HepG2 (cell line): ENCODE measurements at regions of chr3 and their contacts with region 1.

Region 1: DNA sequence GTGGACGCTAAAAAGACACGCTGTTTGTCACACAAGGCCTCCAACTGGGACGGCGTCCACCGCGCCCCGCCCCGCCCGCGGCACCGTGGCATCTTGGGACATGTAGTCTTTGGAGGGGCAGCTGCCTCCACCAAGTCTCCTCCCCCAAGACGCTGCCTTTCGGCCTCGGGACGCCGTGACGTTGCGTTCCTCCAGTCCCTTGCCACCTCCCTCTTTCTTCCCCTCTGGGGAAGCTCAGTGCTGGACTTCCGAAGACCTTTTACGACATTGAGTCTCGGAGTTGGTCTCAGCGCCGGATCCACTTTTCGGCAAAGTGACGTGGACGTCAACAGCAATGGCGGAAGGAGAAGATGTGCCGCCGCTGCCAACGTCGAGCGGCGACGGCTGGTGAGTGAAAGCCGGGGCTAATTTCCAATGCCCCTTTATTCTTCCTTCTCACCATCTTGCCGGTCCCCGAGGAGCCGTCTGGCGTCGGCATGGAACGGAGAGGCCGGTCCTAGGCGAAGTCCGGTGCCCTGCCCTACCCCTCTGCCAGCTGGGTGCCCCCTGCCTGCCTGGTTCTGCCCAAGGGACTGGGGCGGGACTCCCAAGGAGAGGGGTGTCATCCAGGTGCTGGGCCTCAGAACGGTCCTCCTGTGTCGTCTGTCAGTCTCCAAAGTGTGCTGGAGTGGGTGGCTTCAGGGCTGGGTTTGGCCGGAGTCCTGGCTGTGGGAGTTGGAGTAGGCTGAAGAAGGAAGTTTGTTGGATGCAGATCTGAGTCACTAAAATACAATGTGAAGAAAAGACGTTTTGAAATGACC is at the start of gene TBC1D23:
- DNase-seq: peak; percentile 97
- ATAC-seq: peak; percentile 97
- H3K4me3 ChIP-seq: peak within 1 kb of the TSS; percentile 95 to 98 (median 98)
- H3K27ac ChIP-seq: peak within 1 kb of the TSS; percentile 87
- H3K4me1 ChIP-seq: peaks cover 60% of the 10 kb centered on the region
- H3K27me3 ChIP-seq: no peaks in the 10 kb centered on the region; a peak in 1 of 5 replicates
- CTCF ChIP-seq: peak; percentile 25
- EP300 ChIP-seq: no peak
- POLR2A ChIP-seq: peak; percentile 67 to 79
- RAD21 ChIP-seq: no peak
- total RNA-seq, gene TBC1D23: 28.7 and 44.5 TPM in 2 replicates

Region 2: GRCh38 chr3:100060685-100061484 is 200.0 kb before region 1 on chr3:
- CTCF ChIA-PET with region 1: no interaction called
- POLR2A ChIA-PET with region 1: interaction called, 14 read pairs
- in situ Hi-C with region 1: no loop called
- intact Hi-C with region 1: no loop called
- DNase-seq: no peak
- ATAC-seq: no peak
- H3K4me3 ChIP-seq: no peak overlapping the region
- H3K27ac ChIP-seq: no peak overlapping the region
- H3K4me1 ChIP-seq: peaks cover 71% of the 10 kb centered on the region
- H3K27me3 ChIP-seq: no peaks in the 10 kb centered on the region
- CTCF ChIP-seq: no peak
- EP300 ChIP-seq: no peak
- POLR2A ChIP-seq: no peak
- RAD21 ChIP-seq: no peak

Region 3: GRCh38 chr3:100189444-100189964 is 71.4 kb before region 1 on chr3:
- CTCF ChIA-PET with region 1: no interaction called
- POLR2A ChIA-PET with region 1: no interaction called
- in situ Hi-C with region 1: no loop called
- intact Hi-C with region 1: no loop called
- DNase-seq: no peak
- ATAC-seq: no peak
- H3K4me3 ChIP-seq: no peak overlapping the region
- H3K27ac ChIP-seq: no peak overlapping the region
- H3K4me1 ChIP-seq: peaks cover 10% of the 10 kb centered on the region
- H3K27me3 ChIP-seq: no peaks in the 10 kb centered on the region
- CTCF ChIP-seq: no peak
- EP300 ChIP-seq: no peak
- POLR2A ChIP-seq: no peak
- RAD21 ChIP-seq: no peak

Region 4: DNA sequence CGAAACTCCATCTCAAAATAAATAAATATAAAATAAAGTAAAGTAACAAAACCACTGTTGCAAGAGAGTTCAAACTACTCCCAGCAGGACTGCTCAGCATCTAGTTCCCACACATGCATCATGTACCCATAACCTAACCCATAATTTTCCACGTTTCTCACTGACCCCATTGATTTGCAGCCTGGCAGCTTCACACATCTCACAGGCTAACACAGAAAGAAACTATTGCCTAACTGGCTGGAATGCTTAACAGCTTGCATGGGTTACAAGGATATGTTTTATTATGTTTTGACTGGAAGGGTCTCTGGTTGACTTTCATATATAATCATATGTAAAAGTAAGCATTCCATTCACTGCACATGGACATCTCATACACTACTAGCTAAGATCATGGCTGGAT is 55.7 kb before region 1 on chr3:
- CTCF ChIA-PET with region 1: no interaction called
- POLR2A ChIA-PET with region 1: no interaction called
- in situ Hi-C with region 1: no loop called
- intact Hi-C with region 1: no loop called
- DNase-seq: no peak
- ATAC-seq: no peak
- H3K4me3 ChIP-seq: no peak overlapping the region
- H3K27ac ChIP-seq: no peak overlapping the region
- H3K4me1 ChIP-seq: peaks cover 7% of the 10 kb centered on the region
- H3K27me3 ChIP-seq: no peaks in the 10 kb centered on the region
- CTCF ChIP-seq: no peak
- EP300 ChIP-seq: no peak
- POLR2A ChIP-seq: no peak
- RAD21 ChIP-seq: no peak